Transverse colon (tissue), 4 donors: ENCODE measurements at regions of chr11 and their contacts with region 1.

Region 1: DNA sequence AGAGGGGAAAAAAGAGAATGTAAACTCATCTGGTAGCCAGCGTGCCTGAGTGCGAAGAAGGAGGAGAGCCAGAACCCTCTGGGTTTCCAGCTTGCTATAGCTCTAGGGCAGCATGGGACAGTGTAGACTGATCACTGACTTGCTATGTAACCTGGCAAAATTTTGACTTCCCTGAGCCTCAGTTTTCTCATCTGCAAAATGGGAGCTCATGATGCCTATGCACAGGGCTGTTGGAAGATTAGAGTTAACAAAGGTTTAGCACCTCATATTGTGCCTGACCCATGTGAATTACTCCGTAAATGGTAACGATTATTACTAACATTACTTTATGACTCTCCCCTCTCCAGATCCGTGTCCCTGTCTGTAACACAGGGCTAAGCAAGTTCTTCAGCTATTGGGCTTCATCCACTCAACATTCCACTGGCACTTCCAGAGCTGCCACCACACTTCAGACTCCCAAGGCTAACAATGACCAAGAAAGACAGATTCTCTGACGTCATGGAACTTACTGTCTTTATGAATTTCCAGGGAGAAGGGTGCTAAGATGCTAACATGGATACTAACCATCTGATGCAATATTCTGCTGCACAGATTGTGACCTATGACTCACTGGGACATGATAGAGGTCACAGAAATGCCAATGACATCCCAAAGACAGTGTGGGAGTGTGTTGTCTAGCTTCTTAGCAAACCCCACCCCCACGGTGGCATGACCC is 195.2 kb downstream of the TRIM29 start:
- DNase-seq: no peak
- H3K4me3 ChIP-seq: no peak overlapping the region
- H3K27ac ChIP-seq: no peak overlapping the region
- H3K4me1 ChIP-seq: no peaks in the 10 kb centered on the region
- H3K27me3 ChIP-seq: no peaks in the 10 kb centered on the region
- CTCF ChIP-seq: no peak
- EP300 ChIP-seq: no peak
- POLR2A ChIP-seq: no peak

Region 2: GRCh38 chr11:119920666-119921387 is 21.9 kb before region 1 on chr11:
- in situ Hi-C with region 1: no loop called
- intact Hi-C with region 1: loop called (anchors 1 kb)
- DNase-seq: no peak
- H3K4me3 ChIP-seq: no peak overlapping the region
- H3K27ac ChIP-seq: no peak overlapping the region
- H3K4me1 ChIP-seq: no peaks in the 10 kb centered on the region
- H3K27me3 ChIP-seq: peaks cover 11% of the 10 kb centered on the region
- CTCF ChIP-seq: no peak
- EP300 ChIP-seq: no peak
- POLR2A ChIP-seq: no peak